Aorta (tissue), 5 donors: ENCODE measurements at regions of chr5 and their contacts with region 1.

Region 1: GRCh38 chr5:64074533-64074932 is 91.1 kb upstream of the RNF180 start:
- DNase-seq: no peak
- ATAC-seq: no peak
- H3K4me3 ChIP-seq: no peak overlapping the region
- H3K27ac ChIP-seq: no peak overlapping the region
- H3K4me1 ChIP-seq: no peaks in the 10 kb centered on the region
- H3K27me3 ChIP-seq: no peaks in the 10 kb centered on the region

Region 2: GRCh38 chr5:64201996-64202395 is 127.5 kb after region 1 on chr5:
- intact Hi-C with region 1: loop called (anchors 5 kb)
- DNase-seq: no peak
- ATAC-seq: no peak
- H3K4me3 ChIP-seq: no peak overlapping the region
- H3K27ac ChIP-seq: no peak overlapping the region
- H3K4me1 ChIP-seq: peaks cover 2 to 3% of the 10 kb centered on the region in 2 donors
- H3K27me3 ChIP-seq: no peaks in the 10 kb centered on the region

Region 3: DNA sequence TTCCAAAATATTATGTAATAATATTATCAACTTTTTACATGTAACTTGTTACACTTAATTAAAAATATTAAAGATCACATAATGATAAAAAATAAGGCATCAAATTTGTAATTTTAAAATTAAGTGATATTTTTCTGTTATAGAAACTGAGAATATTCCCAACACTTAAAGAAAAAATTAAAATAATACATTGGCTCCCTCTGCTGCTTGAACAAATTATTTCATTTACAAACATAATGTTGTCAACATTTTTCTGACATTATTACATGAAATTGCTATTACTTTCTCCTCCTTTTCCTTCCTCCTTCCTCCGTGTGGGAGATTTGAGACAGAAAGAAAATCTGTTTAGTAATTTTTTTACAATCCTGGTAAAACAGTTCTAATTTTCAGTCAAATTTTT is 133.4 kb after region 1 on chr5:
- intact Hi-C with region 1: loop called (anchors 5 kb)
- DNase-seq: no peak
- ATAC-seq: no peak
- H3K4me3 ChIP-seq: no peak overlapping the region
- H3K27ac ChIP-seq: no peak overlapping the region
- H3K4me1 ChIP-seq: peaks cover 2 to 3% of the 10 kb centered on the region in 2 donors
- H3K27me3 ChIP-seq: no peaks in the 10 kb centered on the region

Region 4: GRCh38 chr5:64595031-64595855 is 520.7 kb after region 1 on chr5:
- intact Hi-C with region 1: no loop called
- DNase-seq: no peak
- ATAC-seq: peak; percentile 65
- H3K4me3 ChIP-seq: no peak overlapping the region
- H3K27ac ChIP-seq: peak overlapping the region in 1 of 2 donors; percentile 36
- H3K4me1 ChIP-seq: no peaks in the 10 kb centered on the region
- H3K27me3 ChIP-seq: no peaks in the 10 kb centered on the region